CD4-positive, alpha-beta memory T cell (primary cell): ENCODE measurements at regions of chr16 and their contacts with region 1.

Region 1: GRCh38 chr16:67935402-67936123 is 1.1 kb downstream of the PSMB10 start:
- DNase-seq: peak; percentile 91 to 99 (median 95)
- H3K4me3 ChIP-seq: peak overlapping the region; percentile 81 to 98
- H3K4me3 Mint-ChIP-seq: peak overlapping the region; percentile 96 to 100 (median 99)
- H3K27ac ChIP-seq: peak overlapping the region; percentile 81
- H3K27ac Mint-ChIP-seq: peak overlapping the region; percentile 96 to 99 (median 98)
- H3K4me1 ChIP-seq: peaks cover 35% of the 10 kb centered on the region
- H3K4me1 Mint-ChIP-seq: peaks cover 21 to 50% (median 40%) of the 10 kb centered on the region in 4 donors
- H3K27me3 ChIP-seq: no peaks in the 10 kb centered on the region
- H3K27me3 Mint-ChIP-seq: no peaks in the 10 kb centered on the region

Region 2: GRCh38 chr16:67806428-67807147 is 129.0 kb before region 1 on chr16 and contains the starts of genes RANBP10 and TSNAXIP1:
- CTCF ChIA-PET with region 1: interaction called, 3 read pairs
- POLR2A ChIA-PET with region 1: interaction called, 27 read pairs
- intact Hi-C with region 1: no loop called
- DNase-seq: peak; percentile 97 to 99 (median 99)
- H3K4me3 ChIP-seq: peak within 1 kb of the TSS; percentile 91 to 93
- H3K4me3 Mint-ChIP-seq: peak within 1 kb of the TSS; percentile 88 to 95 (median 90)
- H3K27ac ChIP-seq: peak within 1 kb of the TSS; percentile 95
- H3K27ac Mint-ChIP-seq: peak within 1 kb of the TSS; percentile 85 to 98 (median 95)
- H3K4me1 ChIP-seq: peaks cover 43% of the 10 kb centered on the region
- H3K4me1 Mint-ChIP-seq: peaks cover 26 to 52% (median 36%) of the 10 kb centered on the region in 4 donors
- H3K27me3 ChIP-seq: no peaks in the 10 kb centered on the region
- H3K27me3 Mint-ChIP-seq: no peaks in the 10 kb centered on the region
- total RNA-seq, gene RANBP10: 25.6 to 27.8 TPM
- total RNA-seq, gene TSNAXIP1: 0.44 to 0.64 TPM

Region 3: DNA sequence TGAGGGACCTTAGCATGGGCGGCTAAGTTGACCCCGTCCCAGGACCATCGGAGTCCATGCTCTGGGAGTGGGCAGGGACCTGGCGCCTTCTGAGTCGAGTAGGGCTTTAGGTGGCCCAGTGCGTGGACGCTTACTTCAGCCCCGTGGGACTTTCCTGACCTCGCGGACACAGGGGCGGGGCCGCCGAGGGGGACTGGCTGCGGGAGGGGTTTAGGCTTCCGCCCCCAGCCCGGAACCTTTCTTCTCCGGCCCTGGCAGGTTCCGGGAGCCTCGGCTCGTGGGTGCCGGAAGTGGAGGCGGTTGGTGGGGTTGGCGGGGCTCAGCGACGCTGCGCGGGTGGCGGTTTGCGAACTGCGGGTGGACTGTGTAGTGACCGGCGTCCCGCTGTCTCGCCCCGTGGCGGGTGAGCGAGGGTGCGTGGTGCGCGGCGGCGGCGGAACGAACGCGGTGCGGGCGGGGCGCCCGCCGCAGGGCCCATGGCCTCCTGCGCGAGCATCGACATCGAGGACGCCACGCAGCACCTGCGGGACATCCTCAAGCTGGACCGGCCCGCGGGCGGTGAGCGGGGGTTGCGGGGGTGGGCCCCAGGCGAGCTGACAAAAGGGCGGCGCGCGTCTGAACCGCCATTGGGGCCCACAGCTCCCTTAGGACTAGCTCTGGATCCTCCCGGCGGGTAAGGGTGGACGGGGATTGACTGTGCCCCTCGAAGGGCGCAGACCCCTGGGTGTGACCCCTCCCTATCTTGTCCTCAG is 62.6 kb before region 1 on chr16 and contains the start of gene EDC4:
- CTCF ChIA-PET with region 1: interaction called, 3 read pairs
- POLR2A ChIA-PET with region 1: interaction called, 29 read pairs
- intact Hi-C with region 1: no loop called
- DNase-seq: peak; percentile 83 to 89 (median 85)
- H3K4me3 ChIP-seq: peak within 1 kb of the TSS; percentile 88 to 90
- H3K4me3 Mint-ChIP-seq: peak within 1 kb of the TSS; percentile 82 to 95 (median 94)
- H3K27ac ChIP-seq: peak within 1 kb of the TSS; percentile 91
- H3K27ac Mint-ChIP-seq: peak within 1 kb of the TSS; percentile 82 to 96 (median 95)
- H3K4me1 ChIP-seq: peaks cover 36% of the 10 kb centered on the region
- H3K4me1 Mint-ChIP-seq: peaks cover 25 to 43% (median 33%) of the 10 kb centered on the region in 4 donors
- H3K27me3 ChIP-seq: no peaks in the 10 kb centered on the region
- H3K27me3 Mint-ChIP-seq: no peaks in the 10 kb centered on the region
- total RNA-seq, gene EDC4: 141 to 144 TPM

Region 4: DNA sequence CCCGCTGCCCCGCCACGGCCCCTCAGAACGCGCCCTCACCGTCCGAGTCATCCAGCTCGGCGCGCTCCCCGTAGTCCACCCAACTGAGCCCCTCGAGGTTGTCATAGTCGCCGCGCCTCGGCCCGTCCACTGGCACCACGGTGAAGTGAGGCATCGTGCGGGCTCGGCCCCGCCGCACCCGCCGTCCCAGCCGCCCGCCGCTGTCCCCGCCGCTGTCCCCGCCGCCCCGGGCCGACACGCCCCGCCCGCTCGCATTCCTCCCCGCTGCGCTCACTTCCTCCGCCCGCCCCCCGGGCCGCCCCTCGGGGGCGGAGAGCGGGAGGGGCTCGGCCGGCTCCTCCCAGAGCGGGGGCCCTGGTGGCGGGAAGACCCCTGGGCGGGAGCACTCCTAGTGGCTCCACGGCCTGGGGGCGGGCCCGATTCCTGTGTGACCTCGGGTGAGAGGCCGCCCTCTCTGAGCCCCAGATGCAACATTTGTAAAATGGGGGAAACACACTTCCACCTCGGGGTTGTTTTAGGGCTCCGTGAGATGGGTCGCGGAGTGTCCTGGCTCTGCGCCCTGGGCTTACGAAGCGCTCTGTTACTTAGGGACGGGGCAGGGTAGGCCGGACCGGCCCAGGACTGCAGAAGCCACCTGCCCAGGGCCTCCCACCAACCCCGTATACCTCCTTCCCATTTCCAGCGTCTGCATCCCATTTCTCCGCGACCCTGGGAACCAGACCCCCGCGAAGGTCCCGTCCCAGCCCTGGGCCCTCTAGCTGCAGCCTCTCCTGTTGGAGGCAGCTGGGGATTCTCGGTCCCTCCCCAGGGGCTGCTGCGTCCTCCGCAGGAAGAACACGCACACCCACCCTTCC is 33.1 kb after region 1 on chr16 and contains the start of gene SLC12A4:
- CTCF ChIA-PET with region 1: no interaction called
- POLR2A ChIA-PET with region 1: interaction called, 49 read pairs
- intact Hi-C with region 1: loop called (anchors 2 kb)
- DNase-seq: peak; percentile 80 to 90 (median 83)
- H3K4me3 ChIP-seq: peak within 1 kb of the TSS; percentile 84 to 91
- H3K4me3 Mint-ChIP-seq: peak within 1 kb of the TSS; percentile 88 to 99 (median 97)
- H3K27ac ChIP-seq: peak within 1 kb of the TSS; percentile 63
- H3K27ac Mint-ChIP-seq: peak within 1 kb of the TSS; percentile 83 to 98 (median 95)
- H3K4me1 ChIP-seq: peaks cover 17% of the 10 kb centered on the region
- H3K4me1 Mint-ChIP-seq: peaks cover 12 to 39% (median 19%) of the 10 kb centered on the region in 4 donors
- H3K27me3 ChIP-seq: no peaks in the 10 kb centered on the region
- H3K27me3 Mint-ChIP-seq: no peaks in the 10 kb centered on the region
- total RNA-seq, gene SLC12A4: 33.2 to 33.5 TPM

Region 5: DNA sequence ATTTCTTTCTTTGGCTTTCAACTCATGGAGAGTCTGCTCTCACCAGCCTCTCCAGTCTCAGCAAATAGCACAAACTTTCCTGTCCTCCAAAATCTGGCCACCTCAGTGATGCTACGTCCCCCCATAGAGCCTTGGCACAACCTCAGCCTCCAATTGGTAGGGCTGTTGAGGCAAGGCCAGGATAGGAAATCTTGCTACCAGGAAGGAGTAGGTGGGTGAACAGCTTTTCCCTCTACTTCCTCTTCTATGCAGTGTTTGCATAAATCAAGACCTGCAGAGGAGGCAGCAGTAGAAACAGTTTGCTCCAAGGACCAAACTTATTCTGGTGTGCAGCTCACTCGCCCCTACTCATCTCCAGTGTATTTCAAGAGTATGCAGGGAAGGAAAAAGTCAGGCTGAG is 64.4 kb after region 1 on chr16:
- CTCF ChIA-PET with region 1: interaction called, 3 read pairs
- POLR2A ChIA-PET with region 1: interaction called, 33 read pairs
- intact Hi-C with region 1: loop called (anchors 1 kb)
- DNase-seq: no peak
- H3K4me3 ChIP-seq: peak overlapping the region in 1 of 2 donors; percentile 41
- H3K4me3 Mint-ChIP-seq: peak overlapping the region; percentile 84 to 96 (median 88)
- H3K27ac ChIP-seq: peak overlapping the region; percentile 60
- H3K27ac Mint-ChIP-seq: peak overlapping the region; percentile 84 to 99 (median 95)
- H3K4me1 ChIP-seq: peaks cover 80% of the 10 kb centered on the region
- H3K4me1 Mint-ChIP-seq: peaks cover 36 to 78% (median 54%) of the 10 kb centered on the region in 4 donors
- H3K27me3 ChIP-seq: no peaks in the 10 kb centered on the region
- H3K27me3 Mint-ChIP-seq: no peaks in the 10 kb centered on the region

Region 6: DNA sequence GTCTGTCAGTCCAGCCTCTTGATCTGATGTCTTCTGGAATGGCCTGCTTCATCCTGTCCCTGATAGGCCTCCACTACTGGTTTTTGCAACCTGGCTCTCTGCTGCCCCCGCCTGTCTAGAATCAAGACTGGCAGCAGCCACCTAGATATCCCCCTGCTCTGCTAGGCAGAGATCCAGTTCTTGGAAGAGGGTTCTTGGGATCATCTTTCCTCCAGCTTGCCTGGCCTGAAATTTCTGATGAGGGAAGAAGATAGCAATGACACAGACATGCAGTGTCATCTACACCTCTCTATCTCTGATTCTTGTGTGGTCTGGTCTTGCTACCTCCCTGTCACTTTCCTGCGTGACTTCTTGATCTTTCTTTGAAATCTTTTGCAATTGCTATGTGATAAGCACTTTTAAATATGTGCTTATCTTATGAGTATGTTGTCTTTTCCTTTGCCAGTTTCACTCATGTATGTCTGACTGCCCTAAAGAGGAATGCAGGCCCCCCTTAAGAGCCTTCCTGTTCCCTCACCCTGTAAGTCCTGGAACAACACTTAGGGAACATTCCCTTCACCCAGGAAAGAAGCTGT is 129.3 kb after region 1 on chr16:
- CTCF ChIA-PET with region 1: no interaction called
- POLR2A ChIA-PET with region 1: interaction called, 12 read pairs
- intact Hi-C with region 1: no loop called
- DNase-seq: peak; percentile 60 to 78 (median 68)
- H3K4me3 ChIP-seq: no peak overlapping the region
- H3K4me3 Mint-ChIP-seq: peak overlapping the region in 6 of 8 donors; percentile 1 to 74 (median 34)
- H3K27ac ChIP-seq: peak overlapping the region; percentile 42
- H3K27ac Mint-ChIP-seq: peak overlapping the region; percentile 79 to 96 (median 84)
- H3K4me1 ChIP-seq: peaks cover 79% of the 10 kb centered on the region
- H3K4me1 Mint-ChIP-seq: peaks cover 51 to 90% (median 71%) of the 10 kb centered on the region in 4 donors
- H3K27me3 ChIP-seq: no peaks in the 10 kb centered on the region
- H3K27me3 Mint-ChIP-seq: no peaks in the 10 kb centered on the region